Endothelial cell of umbilical vein (primary cell): ENCODE measurements at regions of chr6 and their contacts with region 1.

Region 1: GRCh38 chr6:45555981-45556771 is 178.4 kb upstream of the SUPT3H start:
- DNase-seq: no peak
- H3K4me3 ChIP-seq: no peak overlapping the region
- H3K27ac ChIP-seq: no peak overlapping the region
- H3K4me1 ChIP-seq: no peaks in the 10 kb centered on the region
- H3K27me3 ChIP-seq: peaks cover 11 to 24% of the 10 kb centered on the region in 2 experiments
- CTCF ChIP-seq: no peak
- POLR2A ChIP-seq: no peak

Region 2: DNA sequence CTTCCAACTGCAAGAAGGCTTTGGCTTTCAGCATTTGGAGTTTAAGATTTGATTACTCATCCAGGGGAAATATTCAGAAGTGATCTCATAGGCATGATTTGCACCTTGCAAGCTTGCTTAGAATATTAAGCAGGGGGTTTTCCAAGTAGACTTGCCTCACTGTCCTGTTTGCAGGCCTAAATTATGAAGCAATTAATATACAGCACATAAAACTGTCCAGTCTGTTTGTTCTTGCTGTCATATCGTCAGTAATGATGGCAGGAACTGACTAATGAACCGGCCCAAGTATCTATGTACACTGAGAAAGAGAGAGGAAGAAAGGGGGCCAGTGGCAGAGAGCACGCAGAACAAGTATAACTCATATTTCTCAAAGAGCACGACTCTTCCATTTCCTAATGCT is 34.0 kb after region 1 on chr6:
- CTCF ChIA-PET with region 1: no interaction called
- POLR2A ChIA-PET with region 1: interaction called, 11 read pairs
- dilution Hi-C with region 1: no loop called
- intact Hi-C with region 1: no loop called
- DNase-seq: peak; percentile 44
- H3K4me3 ChIP-seq: no peak overlapping the region
- H3K27ac ChIP-seq: no peak overlapping the region
- H3K4me1 ChIP-seq: peaks cover 8% of the 10 kb centered on the region
- H3K27me3 ChIP-seq: no peaks in the 10 kb centered on the region
- CTCF ChIP-seq: no peak
- POLR2A ChIP-seq: no peak